K562 (cell line): ENCODE measurements at regions of chr15 and their contacts with region 1.

Region 1: DNA sequence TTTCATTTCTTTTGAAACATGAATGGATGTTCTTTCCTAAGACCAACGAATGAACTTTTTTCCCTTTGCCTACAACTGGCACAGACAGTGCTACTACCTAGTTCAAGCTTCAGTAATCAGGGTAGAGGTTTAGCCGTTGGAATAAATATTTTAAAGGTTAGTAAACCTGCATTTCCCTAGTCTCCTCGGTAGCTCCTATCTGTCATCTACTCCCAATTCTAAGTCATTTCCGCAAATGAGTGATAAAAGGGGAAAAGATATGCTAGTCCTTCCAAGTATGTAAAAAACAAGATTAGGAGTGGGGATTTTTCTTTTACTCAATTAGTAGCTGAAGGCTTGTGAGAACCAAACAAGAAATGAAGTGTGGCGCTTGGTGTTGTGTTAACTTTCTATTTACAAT is 15.2 kb downstream of the SLTM start:
- DNase-seq: no peak
- ATAC-seq: no peak
- H3K4me3 ChIP-seq: no peak overlapping the region
- H3K27ac ChIP-seq: peak overlapping the region; percentile 60; the same call in 2 of the 3 replicates
- H3K4me1 ChIP-seq: peaks cover 11 to 19% of the 10 kb centered on the region in 2 experiments; a peak in 4 of 5 replicates
- H3K27me3 ChIP-seq: no peaks in the 10 kb centered on the region
- CTCF ChIP-seq: no peak
- EP300 ChIP-seq: no peak; the same call in 1 of the 2 replicates
- POLR2A ChIP-seq: no peak
- RAD21 ChIP-seq: no peak

Region 2: DNA sequence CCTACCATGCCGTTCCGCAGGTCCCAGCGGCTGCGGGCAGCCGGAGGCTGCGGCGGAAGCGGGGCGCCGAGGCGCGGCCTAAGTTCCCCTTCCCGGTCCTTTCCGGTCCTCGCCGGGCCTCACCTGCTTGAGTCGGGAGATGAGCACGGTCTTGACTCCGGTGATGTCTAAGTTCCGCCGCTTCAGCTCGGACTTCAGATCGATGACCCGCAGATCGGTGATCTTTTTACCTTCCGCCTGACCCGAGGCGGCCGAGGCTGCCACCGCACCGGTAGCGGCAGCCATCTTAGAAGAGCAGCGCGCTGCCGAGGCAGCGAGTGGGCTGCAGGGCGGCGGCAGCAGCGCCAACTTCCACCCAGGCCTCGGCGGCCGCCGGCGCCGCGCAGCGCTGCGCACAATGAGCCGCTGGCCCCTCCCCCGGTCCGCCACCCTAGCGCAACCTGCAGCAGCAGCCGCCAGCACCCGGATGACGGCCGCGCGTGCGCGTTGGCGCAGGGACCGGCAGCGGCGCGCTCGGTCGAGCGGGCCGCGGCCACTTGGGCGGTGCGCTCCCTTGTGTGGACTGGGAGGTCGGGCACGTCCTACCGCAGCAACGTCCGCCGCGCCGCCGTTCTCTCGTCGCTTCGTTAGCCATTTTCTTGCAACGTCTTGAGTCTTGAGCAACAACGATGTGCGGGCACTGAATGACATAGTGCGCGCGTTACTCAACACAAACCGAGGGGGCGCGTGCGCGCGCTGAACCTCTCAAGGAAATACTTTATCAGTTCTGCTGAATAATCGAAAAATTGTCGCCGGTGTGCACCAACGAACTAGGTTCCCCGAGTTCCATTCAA is 15.3 kb after region 1 on chr15 and contains the start of gene SLTM:
- CTCF ChIA-PET with region 1: no interaction called
- POLR2A ChIA-PET with region 1: interaction called, 35 read pairs
- in situ Hi-C with region 1: no loop called
- intact Hi-C with region 1: no loop called
- DNase-seq: peak; percentile 91 to 96 (median 94)
- ATAC-seq: peak; percentile 96
- H3K4me3 ChIP-seq: peak within 1 kb of the TSS; percentile 70
- H3K27ac ChIP-seq: peak within 1 kb of the TSS; percentile 89
- H3K4me1 ChIP-seq: peaks cover 0 to 15% of the 10 kb centered on the region in 2 experiments; a peak in 4 of 5 replicates
- H3K27me3 ChIP-seq: no peaks in the 10 kb centered on the region
- CTCF ChIP-seq: no peak; a peak in 1 of 6 replicates
- EP300 ChIP-seq: no peak
- POLR2A ChIP-seq: peak; percentile 96
- RAD21 ChIP-seq: no peak
- polyA plus RNA-seq, gene SLTM: 61.4 to 69.7 TPM

Region 3: DNA sequence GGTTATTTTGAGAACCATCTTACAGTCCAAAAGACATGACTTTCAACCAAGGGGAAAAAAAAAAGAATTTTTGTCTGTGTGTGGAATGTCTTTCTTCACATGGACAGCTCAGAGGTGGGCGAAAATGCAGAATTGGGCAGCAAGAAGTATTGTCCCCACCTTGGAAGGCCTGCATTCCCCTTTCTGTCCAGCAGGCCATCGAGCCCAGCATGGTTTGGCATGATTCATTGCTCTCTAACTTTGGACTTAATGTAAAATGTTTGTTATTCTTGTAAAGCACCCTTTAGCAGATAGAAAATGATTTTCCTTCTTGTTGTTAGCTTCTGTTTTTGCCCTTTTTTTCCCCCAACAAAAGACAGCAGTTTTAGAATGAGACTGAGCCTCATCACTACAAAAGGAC is 442.1 kb after region 1 on chr15:
- CTCF ChIA-PET with region 1: no interaction called
- POLR2A ChIA-PET with region 1: no interaction called
- in situ Hi-C with region 1: no loop called
- intact Hi-C with region 1: no loop called
- DNase-seq: peak in 2 of 4 experiments; percentile 20 to 26
- ATAC-seq: 0 out of 3 replicates have a peak, but pooled peaks have one; percentile 56
- H3K4me3 ChIP-seq: no peak overlapping the region
- H3K27ac ChIP-seq: no peak overlapping the region
- H3K4me1 ChIP-seq: no peaks in the 10 kb centered on the region
- H3K27me3 ChIP-seq: peaks cover 12 to 14% of the 10 kb centered on the region in 2 experiments; a peak in 4 of 5 replicates
- CTCF ChIP-seq: 0 out of 6 replicates have a peak, but pooled peaks of 1 of the 3 experiments have one; percentile 22
- EP300 ChIP-seq: no peak
- POLR2A ChIP-seq: no peak
- RAD21 ChIP-seq: no peak